MCF 10A (cell line): ENCODE measurements at regions of chr5 and their contacts with region 1.

Region 1: DNA sequence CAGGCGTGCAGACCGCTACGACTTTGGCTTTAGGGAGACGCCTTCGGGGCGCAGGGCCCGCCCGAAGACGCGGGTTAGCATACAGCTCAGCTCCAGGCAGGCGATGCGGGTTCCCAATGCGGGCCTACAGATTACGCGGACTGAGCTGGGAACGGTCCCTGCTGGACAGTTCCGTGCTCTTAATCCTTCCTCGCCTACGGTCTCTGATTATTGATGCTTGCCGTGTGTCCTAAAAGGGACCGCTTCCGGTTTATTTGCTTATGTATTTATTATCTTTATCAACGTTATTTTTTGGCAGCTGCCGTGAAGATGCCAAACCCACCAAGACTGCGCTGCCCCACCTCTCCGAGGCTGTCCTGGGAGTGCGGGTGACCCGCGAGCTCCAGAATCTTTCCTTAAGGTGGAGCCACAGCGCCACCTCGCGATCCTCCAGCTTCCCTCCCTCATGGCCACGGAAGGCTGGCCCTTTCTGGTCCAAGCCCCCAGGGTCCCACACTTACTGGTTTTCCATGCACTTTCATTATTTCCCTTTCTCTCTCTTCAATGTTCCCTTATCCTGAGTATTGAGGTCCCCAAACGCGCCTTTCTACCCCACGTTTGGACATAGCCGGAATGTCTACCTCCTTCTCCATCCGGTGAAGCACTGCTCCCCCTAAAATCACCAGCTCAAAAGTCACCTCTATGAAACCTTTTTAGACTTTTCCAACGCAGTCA is 7.0 kb upstream of the EBF1 start:
- DNase-seq: peak; percentile 86
- H3K4me3 Mint-ChIP-seq: peak overlapping the region; percentile 64
- H3K27ac Mint-ChIP-seq: peak overlapping the region; percentile 7
- H3K4me1 Mint-ChIP-seq: peaks cover 14% of the 10 kb centered on the region
- H3K27me3 Mint-ChIP-seq: peaks cover 63% of the 10 kb centered on the region
- CTCF ChIP-seq: peak; percentile 100

Region 2: DNA sequence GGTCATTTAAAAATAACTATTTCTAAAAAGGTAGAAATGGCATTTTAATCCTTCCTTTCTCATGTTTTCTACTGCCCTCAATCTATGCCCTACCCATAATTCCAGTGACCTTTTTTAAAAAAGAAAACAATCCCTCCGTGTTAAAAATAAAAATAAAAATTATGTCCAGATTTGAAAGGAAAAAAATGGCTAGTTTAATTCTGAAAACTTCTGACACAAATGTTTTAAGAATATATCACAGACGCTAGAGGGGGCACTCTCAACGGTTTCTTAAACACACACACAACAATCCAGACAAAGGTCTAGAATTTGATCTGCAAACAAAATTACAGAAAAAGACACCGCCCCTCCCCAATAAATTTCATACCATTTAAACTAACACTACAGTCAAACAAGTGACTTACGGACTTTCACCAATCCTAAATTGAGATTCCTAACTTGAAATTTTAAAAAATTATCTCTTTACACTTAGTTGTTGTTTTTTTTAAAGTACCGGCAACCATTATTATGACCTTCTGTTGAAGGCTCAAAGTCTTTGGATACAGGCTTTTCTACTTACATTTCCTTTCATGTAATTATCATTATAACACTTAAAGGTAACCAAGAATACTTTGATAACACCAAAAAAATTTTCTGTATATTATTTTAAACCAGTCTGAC is 1286.0 kb before region 1 on chr5:
- CTCF ChIA-PET with region 1: interaction called, 10 read pairs
- POLR2A ChIA-PET with region 1: no interaction called
- intact Hi-C with region 1: loop called (anchors 10 kb)
- DNase-seq: peak; percentile 68
- H3K4me3 Mint-ChIP-seq: no peak overlapping the region
- H3K27ac Mint-ChIP-seq: peak overlapping the region; percentile 61
- H3K4me1 Mint-ChIP-seq: peaks cover 21% of the 10 kb centered on the region
- H3K27me3 Mint-ChIP-seq: no peaks in the 10 kb centered on the region
- CTCF ChIP-seq: peak; percentile 68

Region 3: DNA sequence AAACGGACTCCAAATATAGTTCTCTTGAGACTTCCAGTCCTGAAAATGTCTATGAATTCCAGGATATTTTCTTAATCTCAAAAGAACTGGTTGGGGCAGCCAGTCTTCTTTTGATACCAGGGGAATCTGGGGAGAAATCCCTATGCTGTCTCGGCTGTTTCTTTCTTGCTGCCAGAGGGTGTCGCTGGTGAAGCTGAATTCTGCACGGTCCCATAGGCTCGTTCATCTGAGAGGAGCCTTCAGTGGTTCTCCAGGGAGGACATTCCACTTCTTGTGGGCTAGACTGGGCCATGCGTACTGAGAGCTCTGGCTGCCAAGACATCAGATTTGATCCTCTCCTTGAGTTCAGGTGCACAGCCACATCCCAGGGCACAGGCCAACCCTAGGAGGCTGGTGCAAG is 1092.8 kb before region 1 on chr5:
- CTCF ChIA-PET with region 1: interaction called, 7 read pairs
- POLR2A ChIA-PET with region 1: no interaction called
- intact Hi-C with region 1: loop called (anchors 1 kb)
- DNase-seq: peak; percentile 64
- H3K4me3 Mint-ChIP-seq: no peak overlapping the region
- H3K27ac Mint-ChIP-seq: no peak overlapping the region
- H3K4me1 Mint-ChIP-seq: no peaks in the 10 kb centered on the region
- H3K27me3 Mint-ChIP-seq: no peaks in the 10 kb centered on the region
- CTCF ChIP-seq: peak; percentile 68

Region 4: GRCh38 chr5:158174918-158175851 is 931.5 kb before region 1 on chr5:
- CTCF ChIA-PET with region 1: interaction called, 155 read pairs
- POLR2A ChIA-PET with region 1: interaction called, 4 read pairs
- intact Hi-C with region 1: loop called (anchors 1 kb)
- DNase-seq: peak; percentile 84
- H3K4me3 Mint-ChIP-seq: no peak overlapping the region
- H3K27ac Mint-ChIP-seq: peak overlapping the region; percentile 1
- H3K4me1 Mint-ChIP-seq: peaks cover 7% of the 10 kb centered on the region
- H3K27me3 Mint-ChIP-seq: no peaks in the 10 kb centered on the region
- CTCF ChIP-seq: peak; percentile 98

Region 5: GRCh38 chr5:158908425-158909220 is 198.1 kb before region 1 on chr5:
- CTCF ChIA-PET with region 1: no interaction called
- POLR2A ChIA-PET with region 1: no interaction called
- intact Hi-C with region 1: no loop called
- DNase-seq: no peak
- H3K4me3 Mint-ChIP-seq: no peak overlapping the region
- H3K27ac Mint-ChIP-seq: no peak overlapping the region
- H3K4me1 Mint-ChIP-seq: peaks cover 12% of the 10 kb centered on the region
- H3K27me3 Mint-ChIP-seq: no peaks in the 10 kb centered on the region
- CTCF ChIP-seq: no peak

Region 6: GRCh38 chr5:159094745-159095144 is 12.0 kb before region 1 on chr5:
- CTCF ChIA-PET with region 1: interaction called, 27 read pairs
- POLR2A ChIA-PET with region 1: interaction called, 5 read pairs
- intact Hi-C with region 1: no loop called
- DNase-seq: peak; percentile 99
- H3K4me3 Mint-ChIP-seq: no peak overlapping the region
- H3K27ac Mint-ChIP-seq: no peak overlapping the region
- H3K4me1 Mint-ChIP-seq: peaks cover 38% of the 10 kb centered on the region
- H3K27me3 Mint-ChIP-seq: peaks cover 23% of the 10 kb centered on the region
- CTCF ChIP-seq: no peak

Region 7: GRCh38 chr5:159139802-159140201 is 33.1 kb after region 1 on chr5:
- CTCF ChIA-PET with region 1: interaction called, 10 read pairs
- POLR2A ChIA-PET with region 1: interaction called, 3 read pairs
- intact Hi-C with region 1: no loop called
- DNase-seq: no peak
- H3K4me3 Mint-ChIP-seq: no peak overlapping the region
- H3K27ac Mint-ChIP-seq: no peak overlapping the region
- H3K4me1 Mint-ChIP-seq: no peaks in the 10 kb centered on the region
- H3K27me3 Mint-ChIP-seq: peaks cover 37% of the 10 kb centered on the region
- CTCF ChIP-seq: no peak

Region 8: GRCh38 chr5:159936686-159937329 is 830.1 kb after region 1 on chr5:
- CTCF ChIA-PET with region 1: no interaction called
- POLR2A ChIA-PET with region 1: no interaction called
- intact Hi-C with region 1: no loop called
- DNase-seq: peak; percentile 88
- H3K4me3 Mint-ChIP-seq: no peak overlapping the region
- H3K27ac Mint-ChIP-seq: peak overlapping the region; percentile 29
- H3K4me1 Mint-ChIP-seq: peaks cover 21% of the 10 kb centered on the region
- H3K27me3 Mint-ChIP-seq: no peaks in the 10 kb centered on the region
- CTCF ChIP-seq: no peak